ENCODE measurements at regions of chr19 and their contacts with region 1.

Region 1: DNA sequence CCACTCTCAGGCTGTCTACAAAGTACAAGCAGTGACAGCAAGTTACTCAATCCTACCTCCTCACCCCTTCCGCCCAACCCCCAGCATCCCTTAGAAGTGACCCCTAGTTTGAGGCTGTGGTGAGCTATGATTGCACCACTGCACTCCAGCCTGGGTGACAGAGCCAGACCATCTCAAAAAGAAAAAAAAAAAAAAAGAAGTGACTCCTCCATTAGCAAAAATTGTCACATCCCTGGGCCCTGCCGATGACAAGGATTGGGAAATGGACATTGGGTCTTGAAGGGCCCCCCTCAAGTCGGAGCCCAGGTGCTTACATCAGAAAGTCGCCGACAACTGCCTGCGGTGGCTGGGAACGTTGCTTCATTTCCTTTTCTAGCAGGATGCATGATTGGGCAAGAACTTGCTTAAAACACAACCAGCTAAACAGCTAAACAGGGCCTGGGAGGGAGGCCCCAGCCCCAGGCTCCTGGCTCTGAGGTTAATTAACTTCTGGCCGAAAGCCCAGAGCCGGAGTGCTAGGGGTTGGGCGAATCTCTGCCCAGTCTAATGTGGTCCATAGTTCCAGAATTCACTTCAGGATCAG is 15.3 kb downstream of the RAB3D start:
- DNase-seq: peak; percentile 75
- H3K4me3 Mint-ChIP-seq: no peak overlapping the region
- H3K27ac Mint-ChIP-seq: peak overlapping the region; percentile 23
- H3K4me1 Mint-ChIP-seq: peaks cover 26% of the 10 kb centered on the region
- H3K27me3 Mint-ChIP-seq: no peaks in the 10 kb centered on the region
- CTCF ChIP-seq: no peak

Region 2: GRCh38 chr19:11374433-11375142 is 50.4 kb after region 1 on chr19 and contains the start of gene SWSAP1:
- CTCF ChIA-PET with region 1: interaction called, 3 read pairs
- intact Hi-C with region 1: loop called (anchors 10 kb)
- DNase-seq: peak; percentile 93
- H3K4me3 Mint-ChIP-seq: no peak within 1 kb of the TSS
- H3K27ac Mint-ChIP-seq: no peak within 1 kb of the TSS
- H3K4me1 Mint-ChIP-seq: peaks cover 9% of the 10 kb centered on the region
- H3K27me3 Mint-ChIP-seq: no peaks in the 10 kb centered on the region
- CTCF ChIP-seq: no peak
- total RNA-seq, gene SWSAP1: 1.7 and 2.0 TPM in 2 replicates

Measured in Calu3 (cell line).